GM18951 (cell line): ENCODE measurements at regions of chr2 and their contacts with region 1.

Region 1: DNA sequence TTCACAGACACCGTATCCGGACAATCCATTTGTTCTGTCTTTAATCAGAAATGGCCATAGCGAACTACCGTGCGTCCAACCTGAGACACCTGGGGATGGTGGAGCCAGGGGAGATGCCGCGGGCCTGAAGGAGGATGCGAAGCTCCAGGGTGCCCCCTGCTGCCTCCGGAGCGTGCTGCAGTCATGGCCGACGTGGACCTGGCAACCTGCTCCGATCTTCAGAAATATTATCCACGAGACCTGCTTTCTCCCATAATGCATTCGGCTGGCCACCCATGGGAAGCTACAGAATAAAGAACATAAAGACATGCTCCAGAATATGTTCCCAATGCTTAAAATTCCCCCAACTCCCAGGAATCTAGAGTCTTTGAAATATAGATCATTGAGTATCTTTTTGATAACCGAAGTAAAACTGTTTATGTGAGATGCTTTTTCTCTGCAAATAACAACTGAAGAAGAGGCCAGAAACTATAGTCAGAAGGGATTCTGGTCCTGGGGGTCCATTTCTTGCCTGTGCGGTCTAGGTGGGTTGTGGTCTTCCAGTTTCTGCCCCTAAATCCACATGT is 30.7 kb upstream of the SLC66A3 start:
- POLR2A ChIP-seq: no peak

Region 2: GRCh38 chr2:10832203-10832936 is 292.2 kb before region 1 on chr2:
- in situ Hi-C with region 1: loop called (anchors 10 kb)
- POLR2A ChIP-seq: no peak

Region 3: DNA sequence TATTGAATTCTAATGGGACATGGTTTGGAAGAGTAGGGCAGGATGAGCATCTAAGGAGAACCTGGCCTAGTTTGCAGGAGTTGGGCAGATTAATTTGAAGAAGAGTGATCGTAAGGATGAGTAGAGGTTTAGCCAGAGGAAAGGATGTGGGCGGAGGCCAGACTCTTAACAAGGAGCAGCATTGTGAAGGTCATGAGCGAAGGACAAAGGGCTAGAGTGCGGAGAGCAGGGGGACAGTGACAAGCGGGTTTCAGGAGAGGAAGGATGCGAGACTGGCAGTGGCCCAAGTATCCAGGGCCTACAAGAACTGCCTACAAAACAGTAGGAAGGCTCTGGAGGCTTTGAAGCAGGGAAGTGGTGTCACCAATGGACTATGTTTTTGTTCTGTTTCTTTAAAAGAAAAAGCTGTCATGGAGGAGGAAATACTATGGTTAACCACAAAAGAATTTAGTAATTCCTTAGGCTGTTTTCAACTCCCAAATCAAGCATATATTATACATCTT is 50.8 kb after region 1 on chr2:
- in situ Hi-C with region 1: no loop called
- POLR2A ChIP-seq: no peak

Region 4: DNA sequence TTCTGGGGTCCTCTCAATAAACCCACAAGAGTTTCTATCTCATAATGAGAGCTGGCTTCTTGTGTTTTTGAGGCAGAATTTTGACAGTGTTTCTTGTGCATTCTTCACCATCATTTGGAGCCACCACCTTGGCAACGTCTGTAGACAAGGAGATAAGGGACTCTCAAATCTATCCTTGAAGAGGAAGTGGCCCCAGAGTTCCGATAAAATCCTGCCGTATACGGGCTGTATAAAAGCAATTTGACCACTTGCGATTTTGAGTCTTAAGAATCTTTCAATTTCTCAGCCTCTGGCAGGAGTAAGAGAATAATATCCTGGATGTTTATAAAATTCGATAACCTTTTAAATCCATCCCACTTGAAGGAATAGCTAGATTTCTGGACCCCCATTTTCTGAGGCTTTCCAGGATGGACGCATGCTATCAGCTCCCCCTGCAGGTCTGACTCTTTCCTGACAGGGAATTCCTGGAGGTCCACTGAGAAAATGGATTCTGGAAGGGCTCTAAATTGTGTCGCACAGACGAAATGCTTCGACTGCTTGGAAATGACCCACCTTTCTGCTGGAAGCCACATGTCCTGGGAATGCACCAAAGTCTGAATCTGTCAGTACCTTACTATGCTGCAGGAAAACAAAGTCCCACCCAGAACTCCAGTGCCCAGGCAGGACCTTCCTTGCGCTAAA is 287.3 kb after region 1 on chr2:
- in situ Hi-C with region 1: loop called (anchors 25 kb)
- POLR2A ChIP-seq: no peak

Region 5: GRCh38 chr2:11583840-11584524 is 459.4 kb after region 1 on chr2:
- in situ Hi-C with region 1: loop called (anchors 10 kb)
- POLR2A ChIP-seq: no peak